HEK293 (cell line): ENCODE measurements at regions of chr5 and their contacts with region 1.

Region 1: DNA sequence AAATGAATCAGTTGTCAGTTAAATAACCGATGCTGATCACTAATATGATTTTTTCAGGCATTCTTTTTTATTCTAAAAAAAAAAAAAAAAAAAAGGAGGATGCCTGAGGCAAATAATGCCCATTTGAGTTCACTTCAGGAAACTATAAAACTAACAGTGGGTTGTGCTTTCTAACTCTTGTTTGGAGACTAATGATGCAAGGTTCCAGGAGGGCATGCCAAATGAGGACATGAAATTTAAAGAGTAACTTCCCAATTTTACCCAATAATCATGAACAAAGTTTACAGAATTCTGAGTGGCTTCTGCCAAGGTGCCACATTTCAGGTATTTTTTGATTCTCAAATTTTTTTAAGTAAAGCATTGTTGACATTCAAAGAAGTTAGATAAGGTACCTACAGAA is 41.0 kb downstream of the CEP120 start:
- H3K4me3 ChIP-seq: no peak overlapping the region
- H3K27ac ChIP-seq: no peak overlapping the region
- H3K4me1 ChIP-seq: 0 out of 2 replicates have a peak, but pooled peaks cover 2% of the 10 kb centered on the region
- CTCF ChIP-seq: no peak

Region 2: GRCh38 chr5:123215933-123216702 is 166.1 kb before region 1 on chr5:
- CTCF ChIA-PET with region 1: no interaction called
- POLR2A ChIA-PET with region 1: no interaction called
- H3K4me3 ChIP-seq: no peak overlapping the region
- H3K27ac ChIP-seq: no peak overlapping the region
- H3K4me1 ChIP-seq: no peaks in the 10 kb centered on the region
- CTCF ChIP-seq: no peak

Region 3: GRCh38 chr5:123371575-123372179 is 10.6 kb before region 1 on chr5:
- CTCF ChIA-PET with region 1: interaction called, 15 read pairs
- POLR2A ChIA-PET with region 1: no interaction called
- H3K4me3 ChIP-seq: no peak overlapping the region
- H3K27ac ChIP-seq: no peak overlapping the region
- H3K4me1 ChIP-seq: peaks cover 3% of the 10 kb centered on the region; the same call in 1 of the 2 replicates
- CTCF ChIP-seq: no peak